T-cell (primary cell): ENCODE measurements at regions of chr3 and their contacts with region 1.

Region 1: DNA sequence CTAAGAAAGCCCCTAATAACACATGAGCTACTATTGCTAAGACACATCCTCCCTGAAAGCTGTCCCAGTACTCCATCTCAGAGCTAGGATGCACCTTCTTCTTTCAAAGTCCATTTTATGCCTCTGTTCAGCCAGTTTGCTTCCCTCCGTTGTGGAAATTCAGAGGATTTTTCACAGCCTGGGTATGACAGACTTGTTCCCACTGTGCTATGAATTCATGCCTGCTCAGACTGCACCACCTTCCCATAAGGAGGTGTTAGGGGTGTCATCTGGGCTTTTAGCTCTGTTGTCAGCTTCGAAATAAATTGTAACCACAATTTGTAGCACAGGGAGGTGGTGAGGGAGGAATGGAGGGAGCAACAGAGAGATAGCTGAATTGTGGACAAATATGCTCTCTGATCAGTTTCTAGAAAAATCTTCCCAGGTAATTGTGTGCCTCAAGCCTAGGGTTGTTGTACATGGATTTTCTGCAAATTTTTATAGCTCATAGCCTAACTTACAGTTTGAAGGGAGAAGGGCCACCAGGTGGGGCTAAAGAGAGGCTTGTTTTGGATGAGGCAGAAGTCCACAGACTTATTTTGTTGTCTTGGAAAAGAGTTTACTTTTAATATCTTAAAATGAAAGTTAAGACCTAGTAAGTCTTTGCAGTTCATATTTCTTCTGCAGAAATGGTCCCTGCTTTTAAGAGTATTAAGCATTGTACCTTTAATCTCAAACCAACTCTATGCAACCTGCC is 462.0 kb downstream of the PDCD6IP start:
- DNase-seq: peak in 4 of 35 experiments; percentile 1 to 19 (median 5)
- ATAC-seq: no peak
- H3K4me3 ChIP-seq: no peak overlapping the region
- H3K4me3 Mint-ChIP-seq: no peak overlapping the region
- H3K27ac ChIP-seq: no peak overlapping the region
- H3K27ac Mint-ChIP-seq: no peak overlapping the region
- H3K4me1 ChIP-seq: no peaks in the 10 kb centered on the region
- H3K4me1 Mint-ChIP-seq: no peaks in the 10 kb centered on the region
- H3K27me3 ChIP-seq: no peaks in the 10 kb centered on the region
- H3K27me3 Mint-ChIP-seq: peaks cover 0 to 2% of the 10 kb centered on the region in 2 donors

Region 2: DNA sequence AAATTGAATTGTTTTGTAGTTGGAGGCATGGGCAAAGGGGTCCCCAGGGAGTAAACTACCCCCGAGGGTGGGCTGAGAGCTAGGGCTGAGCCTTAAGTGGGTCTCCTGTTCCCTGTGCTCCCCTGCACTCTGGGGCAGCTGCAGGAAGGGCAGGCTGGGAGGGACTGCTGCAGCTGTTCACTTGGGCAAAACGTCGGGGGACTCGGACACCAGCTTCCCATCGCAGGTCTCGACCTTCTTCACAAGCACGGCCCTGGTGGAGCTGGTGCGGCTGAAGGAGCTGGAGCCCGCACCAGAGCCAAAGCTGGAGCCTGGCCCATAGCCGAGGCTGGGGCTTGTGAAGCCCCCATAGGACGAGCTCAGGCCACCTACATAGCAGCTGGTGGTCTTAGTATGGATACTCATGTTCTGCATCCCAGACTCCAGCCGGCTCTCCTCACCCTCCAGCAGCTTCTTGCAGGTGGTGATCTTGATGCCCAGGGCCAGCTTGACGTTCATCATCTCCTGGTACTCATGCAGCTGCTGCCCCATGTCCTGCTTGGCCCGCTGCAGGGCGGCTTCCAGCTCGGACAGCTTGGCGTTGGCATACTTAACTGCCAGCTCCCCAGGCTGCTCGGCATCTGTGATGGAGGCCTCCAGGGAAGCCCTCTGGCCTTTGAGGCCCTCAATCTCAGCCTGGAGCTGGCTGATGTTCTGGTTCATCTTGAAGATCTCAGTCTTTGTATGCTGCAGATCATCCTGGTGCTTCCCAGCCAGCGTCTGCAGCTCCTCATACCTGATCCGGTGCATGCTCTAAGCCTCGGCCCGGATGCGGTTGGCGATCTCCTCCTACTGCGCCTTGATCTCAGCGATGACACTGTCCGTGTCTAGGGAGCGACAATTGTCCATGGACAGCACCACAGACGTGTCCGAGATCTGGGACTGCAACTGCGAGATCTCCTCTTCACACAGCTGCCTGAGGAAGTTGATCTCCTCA is 955.4 kb after region 1 on chr3:
- CTCF ChIA-PET with region 1: interaction called in 1 of 2 experiments, 14 read pairs
- POLR2A ChIA-PET with region 1: no interaction called
- DNase-seq: no peak
- ATAC-seq: peak in 1 of 4 experiments; percentile 20
- H3K4me3 ChIP-seq: no peak overlapping the region
- H3K4me3 Mint-ChIP-seq: no peak overlapping the region
- H3K27ac ChIP-seq: no peak overlapping the region
- H3K27ac Mint-ChIP-seq: no peak overlapping the region
- H3K4me1 ChIP-seq: no peaks in the 10 kb centered on the region
- H3K4me1 Mint-ChIP-seq: no peaks in the 10 kb centered on the region
- H3K27me3 ChIP-seq: no peaks in the 10 kb centered on the region
- H3K27me3 Mint-ChIP-seq: no peaks in the 10 kb centered on the region